Motor neuron (in vitro differentiated cells): ENCODE measurements at regions of chr13 and their contacts with region 1.

Region 1: DNA sequence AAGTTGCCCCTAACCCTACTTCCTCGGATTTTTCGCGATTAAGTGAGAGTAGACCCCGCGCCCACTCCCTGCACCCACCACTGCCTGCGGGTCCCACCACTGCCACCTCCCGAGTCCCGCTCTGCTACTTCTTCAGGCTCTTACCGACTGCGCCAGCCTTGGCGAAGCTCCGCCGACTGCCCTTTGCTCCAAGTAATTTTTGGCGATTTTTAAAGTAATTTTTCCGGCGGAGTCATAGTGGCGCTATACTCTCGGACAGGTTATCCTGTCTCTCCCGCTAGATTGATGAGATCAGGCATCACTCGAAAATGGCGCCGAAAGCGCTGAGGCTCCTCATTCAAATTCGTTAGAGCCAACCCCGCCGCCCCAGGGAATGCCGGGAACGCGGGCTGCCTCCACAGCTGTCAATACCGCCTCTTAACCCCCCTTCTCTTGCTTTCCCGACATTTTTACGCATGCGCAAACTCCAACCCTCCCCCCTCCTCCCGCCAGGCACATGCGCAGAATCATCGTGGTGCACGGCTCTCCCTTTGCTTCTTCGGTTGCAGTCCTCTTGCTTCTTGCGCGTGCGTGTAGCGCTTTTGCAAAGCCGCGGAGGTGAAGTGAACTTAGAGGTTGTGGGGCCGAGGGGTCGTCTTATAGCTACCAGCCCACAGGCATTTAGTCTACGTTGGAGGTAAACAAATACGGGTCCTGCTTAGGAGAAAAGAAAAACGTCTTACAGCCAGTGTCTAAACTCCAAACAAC is 66.6 kb downstream of the KCNRG start:
- ATAC-seq: peak; percentile 82 to 93 (median 88)
- H3K4me3 ChIP-seq: peak overlapping the region; percentile 54 to 76 (median 64)
- H3K27ac ChIP-seq: peak overlapping the region; percentile 8 to 62
- H3K4me1 ChIP-seq: no peaks in the 10 kb centered on the region

Region 2: GRCh38 chr13:50299546-50300249 is 217.8 kb after region 1 on chr13:
- in situ Hi-C with region 1: no loop called
- ATAC-seq: no peak
- H3K4me3 ChIP-seq: no peak overlapping the region
- H3K27ac ChIP-seq: no peak overlapping the region
- H3K4me1 ChIP-seq: no peaks in the 10 kb centered on the region

Region 3: DNA sequence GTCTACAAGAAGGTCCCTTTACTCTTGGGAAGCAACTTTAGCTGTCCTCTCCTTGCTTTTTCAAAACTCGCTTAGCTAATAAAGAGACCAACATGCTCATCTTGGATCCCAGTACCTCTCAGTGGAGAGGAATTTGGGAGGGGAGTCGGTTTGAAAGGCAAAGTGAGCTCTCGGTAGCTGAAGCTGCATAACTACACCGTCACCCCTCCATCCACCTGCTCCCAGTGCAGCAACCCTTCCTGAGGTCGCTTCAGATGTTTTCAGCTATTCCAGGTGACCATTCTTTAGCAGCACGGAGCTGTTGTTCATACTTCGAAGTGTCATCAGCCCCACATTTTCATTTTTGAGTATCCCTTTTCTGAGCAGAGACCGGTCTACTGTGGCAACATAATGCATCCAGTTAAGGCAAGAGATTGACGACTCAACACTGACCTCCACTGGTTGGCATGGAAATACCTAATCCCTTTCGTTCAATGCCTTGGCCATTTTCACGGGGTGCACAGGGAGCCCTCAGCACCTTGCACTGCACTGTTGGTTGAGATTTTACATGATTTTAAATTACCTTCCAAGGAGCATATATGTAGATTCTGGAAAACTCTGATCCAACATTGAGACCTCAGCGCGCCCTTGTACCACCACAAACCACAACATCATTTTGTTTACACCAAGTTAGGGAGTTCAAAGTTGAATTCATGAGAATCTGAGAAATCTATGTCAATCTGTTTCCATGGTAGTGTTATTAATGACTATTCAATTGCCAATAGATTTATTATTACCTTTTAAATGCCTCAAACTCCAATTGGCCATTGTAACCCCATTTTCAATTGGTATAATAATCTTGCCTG is 719.5 kb after region 1 on chr13:
- in situ Hi-C with region 1: loop called in 1 of 9 experiments (anchors 25 kb)
- ATAC-seq: peak; percentile 46 to 96 (median 82)
- H3K4me3 ChIP-seq: no peak overlapping the region
- H3K27ac ChIP-seq: no peak overlapping the region
- H3K4me1 ChIP-seq: no peaks in the 10 kb centered on the region